Activated CD4-positive, alpha-beta T cell treated with anti-CD3 and anti-CD28 coated beads for 36 hours (primary cell): ENCODE measurements at regions of chr7 and their contacts with region 1.

Region 1: GRCh38 chr7:42690794-42691639 is 220.9 kb downstream of the C7orf25 start:
- DNase-seq: no peak
- ATAC-seq: no peak
- H3K4me3 Mint-ChIP-seq: no peak overlapping the region
- H3K27ac Mint-ChIP-seq: no peak overlapping the region
- H3K4me1 Mint-ChIP-seq: no peaks in the 10 kb centered on the region
- H3K27me3 Mint-ChIP-seq: peaks cover 5% of the 10 kb centered on the region

Region 2: GRCh38 chr7:42014625-42015546 is 676.1 kb before region 1 on chr7:
- CTCF ChIA-PET with region 1: no interaction called
- POLR2A ChIA-PET with region 1: no interaction called
- intact Hi-C with region 1: loop called in 1 of 2 experiments (anchors 10 kb)
- DNase-seq: peak; percentile 71
- ATAC-seq: no peak
- H3K4me3 Mint-ChIP-seq: no peak overlapping the region
- H3K27ac Mint-ChIP-seq: no peak overlapping the region
- H3K4me1 Mint-ChIP-seq: no peaks in the 10 kb centered on the region
- H3K27me3 Mint-ChIP-seq: peaks cover 28% of the 10 kb centered on the region